ENCODE measurements at regions of chr15 and their contacts with region 1.

Region 1: DNA sequence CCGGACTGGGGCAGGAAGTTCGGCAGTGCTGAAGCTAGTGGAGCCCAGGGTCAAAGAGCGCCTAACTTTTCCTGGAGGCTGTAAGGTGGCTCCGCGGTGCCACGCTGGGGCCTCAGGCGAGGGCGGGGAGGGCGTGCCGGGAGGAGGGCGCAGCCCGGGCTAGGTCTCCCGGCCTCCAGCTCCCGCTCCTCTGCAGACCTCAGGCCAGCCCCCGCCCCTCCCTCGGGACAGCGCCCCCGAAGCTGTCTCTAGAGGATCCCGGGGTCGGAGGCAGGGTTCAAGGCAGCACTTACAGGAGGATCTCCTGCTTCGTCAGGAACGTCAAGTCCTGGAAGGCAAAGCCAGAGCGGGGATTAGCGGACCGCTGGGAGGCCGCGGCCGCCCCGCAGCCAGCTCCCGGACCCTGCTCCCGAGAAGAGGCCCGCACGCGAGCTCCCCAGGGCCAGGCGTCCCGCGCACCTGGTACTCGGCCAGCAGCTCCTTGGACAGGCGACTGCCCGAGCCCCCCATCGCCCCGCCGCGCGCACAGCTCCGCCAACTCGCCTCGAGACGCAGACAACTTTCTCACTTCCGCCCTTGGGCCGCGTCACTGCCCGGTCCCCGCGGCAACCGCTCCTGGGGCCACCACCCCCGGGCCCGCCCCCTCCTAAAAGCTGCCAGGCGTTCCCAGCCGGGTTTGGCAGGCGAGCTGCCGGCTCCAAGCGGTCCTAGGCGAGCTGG is at the start of gene CIB1:
- DNase-seq: peak; percentile 88
- ATAC-seq: peak; percentile 93
- H3K4me3 ChIP-seq: peak within 1 kb of the TSS; percentile 73 to 86 (median 80)
- H3K27ac ChIP-seq: peak within 1 kb of the TSS; percentile 94
- H3K4me1 ChIP-seq: peaks cover 28% of the 10 kb centered on the region
- H3K27me3 ChIP-seq: no peaks in the 10 kb centered on the region; a peak in 1 of 5 replicates
- CTCF ChIP-seq: peak; percentile 86; the same call in 1 of the 2 replicates
- EP300 ChIP-seq: peak in 1 of 2 experiments; percentile 9; a peak in 1 of 4 replicates
- POLR2A ChIP-seq: peak in 1 of 2 experiments; percentile 73; a peak in 3 of 4 replicates
- RAD21 ChIP-seq: no peak
- total RNA-seq, gene CIB1: 38.7 and 52.4 TPM in 2 replicates

Region 2: GRCh38 chr15:90101969-90102890 is 131.3 kb before region 1 on chr15 and contains the start of gene IDH2:
- CTCF ChIA-PET with region 1: no interaction called
- POLR2A ChIA-PET with region 1: no interaction called
- in situ Hi-C with region 1: no loop called
- intact Hi-C with region 1: no loop called
- DNase-seq: peak; percentile 48
- ATAC-seq: peak; percentile 92
- H3K4me3 ChIP-seq: peak within 1 kb of the TSS; percentile 76 to 84 (median 77)
- H3K27ac ChIP-seq: peak within 1 kb of the TSS; percentile 76
- H3K4me1 ChIP-seq: peaks cover 79% of the 10 kb centered on the region
- H3K27me3 ChIP-seq: peaks cover 0 to 1% of the 10 kb centered on the region in 2 experiments; a peak in 1 of 5 replicates
- CTCF ChIP-seq: no peak
- EP300 ChIP-seq: no peak
- POLR2A ChIP-seq: peak; percentile 80 to 96
- RAD21 ChIP-seq: 0 out of 2 replicates have a peak, but pooled peaks have one; percentile 15
- total RNA-seq, gene IDH2: 120 and 121 TPM in 2 replicates

Region 3: GRCh38 chr15:90191794-90192509 is 41.6 kb before region 1 on chr15:
- CTCF ChIA-PET with region 1: no interaction called
- POLR2A ChIA-PET with region 1: interaction called, 12 read pairs
- in situ Hi-C with region 1: no loop called
- intact Hi-C with region 1: no loop called
- DNase-seq: peak; percentile 90
- ATAC-seq: peak; percentile 88
- H3K4me3 ChIP-seq: peak overlapping the region; percentile 23 to 54 (median 31); a peak in 5 of 6 replicates
- H3K27ac ChIP-seq: peak overlapping the region; percentile 65
- H3K4me1 ChIP-seq: peaks cover 42% of the 10 kb centered on the region
- H3K27me3 ChIP-seq: no peaks in the 10 kb centered on the region
- CTCF ChIP-seq: peak; percentile 34; the same call in 1 of the 2 replicates
- EP300 ChIP-seq: peak in 1 of 2 experiments; percentile 60; a peak in 2 of 4 replicates
- POLR2A ChIP-seq: peak; percentile 21 to 70; a peak in 1 of 4 replicates
- RAD21 ChIP-seq: no peak

Region 4: GRCh38 chr15:90249203-90249863 is 15.8 kb after region 1 on chr15 and contains the start of gene TTLL13:
- CTCF ChIA-PET with region 1: no interaction called
- POLR2A ChIA-PET with region 1: interaction called, 50 read pairs
- in situ Hi-C with region 1: no loop called
- intact Hi-C with region 1: loop called (anchors 1 kb)
- DNase-seq: peak; percentile 89
- ATAC-seq: peak; percentile 94
- H3K4me3 ChIP-seq: peak within 1 kb of the TSS; percentile 62 to 79 (median 73); a peak in 5 of 6 replicates
- H3K27ac ChIP-seq: peak within 1 kb of the TSS; percentile 60
- H3K4me1 ChIP-seq: peaks cover 56% of the 10 kb centered on the region
- H3K27me3 ChIP-seq: no peaks in the 10 kb centered on the region
- CTCF ChIP-seq: peak; percentile 35
- EP300 ChIP-seq: no peak
- POLR2A ChIP-seq: peak; percentile 64 to 84
- RAD21 ChIP-seq: peak; percentile 24; the same call in 1 of the 2 replicates
- total RNA-seq, gene TTLL13: 0.29 TPM in 1 of 2 replicates, not detected in the other

Region 5: DNA sequence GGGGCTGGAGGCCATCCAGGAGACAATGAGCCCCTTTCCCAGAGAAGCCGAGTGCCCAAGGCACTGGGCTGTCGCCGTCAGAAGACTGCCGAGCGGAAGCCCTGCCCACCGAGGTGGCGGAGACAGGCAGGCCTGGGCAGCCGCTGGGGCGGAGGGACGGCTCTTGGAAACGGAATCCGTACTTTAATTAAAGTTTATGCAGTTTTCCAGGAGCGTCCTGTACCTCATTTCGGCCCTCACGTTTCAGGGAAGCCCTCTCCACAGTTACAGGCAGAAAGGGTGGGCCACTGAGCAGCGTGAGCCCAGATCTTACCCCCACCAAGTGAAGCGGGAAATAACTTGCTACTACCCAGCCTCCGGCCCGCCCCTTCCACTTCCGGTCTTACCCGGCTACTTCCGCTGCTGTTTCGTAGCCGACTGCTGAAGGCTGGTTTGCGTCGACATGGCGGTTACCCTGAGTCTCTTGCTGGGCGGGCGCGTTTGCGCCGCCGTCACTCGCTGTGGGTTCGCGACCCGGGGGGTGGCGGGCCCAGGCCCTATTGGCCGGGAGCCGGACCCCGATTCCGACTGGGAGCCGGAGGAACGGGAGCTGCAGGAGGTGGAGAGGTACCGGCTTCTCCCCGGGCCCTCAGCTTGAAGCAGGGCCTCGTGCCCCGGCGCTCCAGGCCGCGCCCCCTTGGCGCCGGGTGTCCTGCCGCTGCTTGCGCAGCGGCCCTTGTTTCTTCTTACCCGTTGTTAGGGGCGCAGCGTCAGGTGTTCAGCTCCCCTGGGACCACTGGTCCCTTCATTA is 31.9 kb after region 1 on chr15 and contains the start of gene NGRN:
- CTCF ChIA-PET with region 1: no interaction called
- POLR2A ChIA-PET with region 1: interaction called, 9 read pairs
- in situ Hi-C with region 1: no loop called
- intact Hi-C with region 1: loop called (anchors 5 kb)
- DNase-seq: peak; percentile 83
- ATAC-seq: peak; percentile 93
- H3K4me3 ChIP-seq: peak within 1 kb of the TSS; percentile 71 to 78 (median 72)
- H3K27ac ChIP-seq: peak within 1 kb of the TSS; percentile 83
- H3K4me1 ChIP-seq: peaks cover 62% of the 10 kb centered on the region
- H3K27me3 ChIP-seq: no peaks in the 10 kb centered on the region; a peak in 1 of 5 replicates
- CTCF ChIP-seq: no peak
- EP300 ChIP-seq: no peak
- POLR2A ChIP-seq: peak; percentile 96 to 99
- RAD21 ChIP-seq: peak; percentile 57; the same call in 1 of the 2 replicates
- total RNA-seq, gene NGRN: 63.7 and 77.7 TPM in 2 replicates